ENCODE measurements at regions of chr12 and their contacts with region 1.

Region 1: DNA sequence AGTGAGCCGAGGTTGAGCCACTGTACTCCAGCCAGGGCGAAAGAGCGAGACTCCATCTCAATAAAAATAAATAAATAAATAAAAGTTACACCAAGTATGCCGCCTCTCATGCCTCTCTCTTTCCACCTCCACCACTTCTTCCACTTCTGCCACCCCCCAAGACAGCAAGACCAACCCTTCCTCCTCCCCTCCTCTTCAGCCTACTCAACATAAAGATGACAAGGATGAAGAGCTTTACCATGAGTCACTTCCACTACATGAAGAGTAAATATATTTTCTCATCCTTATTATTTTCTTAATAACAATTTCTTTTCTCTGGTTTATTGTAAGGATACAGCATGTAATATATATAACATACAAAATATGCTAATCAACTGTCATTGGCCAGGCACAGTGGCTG is 3.6 kb upstream of the TMED2 start:
- DNase-seq: no peak
- ATAC-seq: no peak
- H3K4me3 ChIP-seq: no peak overlapping the region
- H3K27ac ChIP-seq: peak overlapping the region in 3 of 12 donors; percentile 30 to 59 (median 44)
- H3K4me1 ChIP-seq: peaks cover 0 to 31% (median 22%) of the 10 kb centered on the region in 12 donors
- H3K27me3 ChIP-seq: no peaks in the 10 kb centered on the region
- CTCF ChIP-seq: no peak
- POLR2A ChIP-seq: no peak

Region 2: GRCh38 chr12:123365025-123365917 is 215.5 kb before region 1 on chr12:
- intact Hi-C with region 1: loop called in 3 of 10 experiments (anchors 1 to 2 kb)
- DNase-seq: peak; percentile 99
- ATAC-seq: peak; percentile 90 to 96 (median 94)
- H3K4me3 ChIP-seq: peak overlapping the region; percentile 67 to 98 (median 87)
- H3K27ac ChIP-seq: peak overlapping the region; percentile 82 to 99 (median 95)
- H3K4me1 ChIP-seq: peaks cover 4 to 38% (median 21%) of the 10 kb centered on the region in 12 donors
- H3K27me3 ChIP-seq: no peaks in the 10 kb centered on the region
- CTCF ChIP-seq: peak; percentile 52 to 96 (median 73)
- POLR2A ChIP-seq: peak in 1 of 2 donors; percentile 76

Region 3: GRCh38 chr12:123436017-123436964 is 144.5 kb before region 1 on chr12 and contains the start of gene RILPL2:
- intact Hi-C with region 1: loop called in 1 of 10 experiments (anchors 5 kb)
- DNase-seq: peak; percentile 90 to 94 (median 90)
- ATAC-seq: peak; percentile 91 to 98 (median 96)
- H3K4me3 ChIP-seq: peak within 1 kb of the TSS; percentile 63 to 98 (median 91)
- H3K27ac ChIP-seq: peak within 1 kb of the TSS; percentile 47 to 93 (median 82)
- H3K4me1 ChIP-seq: peaks cover 0 to 51% (median 27%) of the 10 kb centered on the region in 12 donors
- H3K27me3 ChIP-seq: no peaks in the 10 kb centered on the region
- CTCF ChIP-seq: peak in 1 of 12 donors; percentile 3
- POLR2A ChIP-seq: peak in 1 of 2 donors; percentile 63
- total RNA-seq, gene RILPL2: 1.6 to 3.4 (median 2.1) TPM

Region 4: GRCh38 chr12:123468562-123469185 is 112.1 kb before region 1 on chr12:
- intact Hi-C with region 1: loop called in 1 of 10 experiments (anchors 5 kb)
- DNase-seq: no peak
- ATAC-seq: no peak
- H3K4me3 ChIP-seq: no peak overlapping the region
- H3K27ac ChIP-seq: no peak overlapping the region
- H3K4me1 ChIP-seq: peaks cover 0 to 52% (median 22%) of the 10 kb centered on the region in 12 donors
- H3K27me3 ChIP-seq: no peaks in the 10 kb centered on the region
- CTCF ChIP-seq: peak in 4 of 12 donors; percentile 9 to 21 (median 15)
- POLR2A ChIP-seq: no peak

Measured in heart left ventricle (tissue), 16 donors.